Activated B cell treated with CpG ODN at 0.5 μM for 24 hours (primary cell): ENCODE measurements at regions of chr16 and their contacts with region 1.

Region 1: GRCh38 chr16:48365581-48366164 is 19.5 kb downstream of the SIAH1 start:
- DNase-seq: peak; percentile 74
- ATAC-seq: peak; percentile 94
- H3K4me3 Mint-ChIP-seq: peak overlapping the region; percentile 88
- H3K27ac Mint-ChIP-seq: peak overlapping the region; percentile 96
- H3K4me1 Mint-ChIP-seq: peaks cover 65% of the 10 kb centered on the region
- H3K27me3 Mint-ChIP-seq: no peaks in the 10 kb centered on the region
- CTCF ChIP-seq: no peak

Region 2: DNA sequence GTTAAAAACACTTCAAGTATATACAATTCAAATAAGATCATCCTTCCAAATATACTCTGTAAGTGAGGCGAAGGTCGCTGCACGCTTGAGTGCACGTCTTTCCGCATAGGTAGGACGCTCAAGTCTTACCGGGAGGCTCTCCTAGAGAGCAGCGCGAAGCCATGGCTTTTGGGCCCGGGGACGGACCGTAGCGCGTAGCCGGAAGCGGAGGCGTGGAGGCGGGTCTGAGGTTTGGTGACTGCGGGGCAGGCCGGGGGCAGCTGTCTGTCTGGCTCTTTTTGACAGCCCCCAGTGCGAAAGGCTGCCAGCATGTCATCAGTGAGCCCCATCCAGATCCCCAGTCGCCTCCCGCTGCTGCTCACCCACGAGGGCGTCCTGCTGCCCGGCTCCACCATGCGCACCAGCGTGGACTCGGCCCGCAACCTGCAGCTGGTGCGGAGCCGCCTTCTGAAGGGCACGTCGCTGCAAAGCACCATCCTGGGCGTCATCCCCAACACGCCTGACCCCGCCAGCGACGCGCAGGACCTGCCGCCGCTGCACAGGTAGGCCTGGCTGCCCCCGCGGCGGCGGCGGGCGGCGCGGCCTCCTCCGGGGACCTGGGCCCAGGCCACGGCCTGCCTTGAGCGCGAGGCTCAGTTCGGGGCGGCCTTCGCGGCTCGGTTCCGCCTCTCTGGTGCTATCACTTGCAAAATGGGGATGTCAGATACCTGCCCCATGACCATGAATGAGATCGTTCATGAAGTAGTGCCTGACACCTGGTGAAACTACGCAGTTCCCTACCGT is 121.4 kb before region 1 on chr16 and contains the start of gene LONP2:
- CTCF ChIA-PET with region 1: no interaction called
- POLR2A ChIA-PET with region 1: interaction called, 7 read pairs
- intact Hi-C with region 1: loop called (anchors 1 kb)
- DNase-seq: peak; percentile 86
- ATAC-seq: peak; percentile 97
- H3K4me3 Mint-ChIP-seq: peak within 1 kb of the TSS; percentile 91
- H3K27ac Mint-ChIP-seq: peak within 1 kb of the TSS; percentile 90
- H3K4me1 Mint-ChIP-seq: peaks cover 34% of the 10 kb centered on the region
- H3K27me3 Mint-ChIP-seq: no peaks in the 10 kb centered on the region
- CTCF ChIP-seq: no peak
- total RNA-seq, gene LONP2: 63.5 and 72.7 TPM in 2 replicates

Region 3: DNA sequence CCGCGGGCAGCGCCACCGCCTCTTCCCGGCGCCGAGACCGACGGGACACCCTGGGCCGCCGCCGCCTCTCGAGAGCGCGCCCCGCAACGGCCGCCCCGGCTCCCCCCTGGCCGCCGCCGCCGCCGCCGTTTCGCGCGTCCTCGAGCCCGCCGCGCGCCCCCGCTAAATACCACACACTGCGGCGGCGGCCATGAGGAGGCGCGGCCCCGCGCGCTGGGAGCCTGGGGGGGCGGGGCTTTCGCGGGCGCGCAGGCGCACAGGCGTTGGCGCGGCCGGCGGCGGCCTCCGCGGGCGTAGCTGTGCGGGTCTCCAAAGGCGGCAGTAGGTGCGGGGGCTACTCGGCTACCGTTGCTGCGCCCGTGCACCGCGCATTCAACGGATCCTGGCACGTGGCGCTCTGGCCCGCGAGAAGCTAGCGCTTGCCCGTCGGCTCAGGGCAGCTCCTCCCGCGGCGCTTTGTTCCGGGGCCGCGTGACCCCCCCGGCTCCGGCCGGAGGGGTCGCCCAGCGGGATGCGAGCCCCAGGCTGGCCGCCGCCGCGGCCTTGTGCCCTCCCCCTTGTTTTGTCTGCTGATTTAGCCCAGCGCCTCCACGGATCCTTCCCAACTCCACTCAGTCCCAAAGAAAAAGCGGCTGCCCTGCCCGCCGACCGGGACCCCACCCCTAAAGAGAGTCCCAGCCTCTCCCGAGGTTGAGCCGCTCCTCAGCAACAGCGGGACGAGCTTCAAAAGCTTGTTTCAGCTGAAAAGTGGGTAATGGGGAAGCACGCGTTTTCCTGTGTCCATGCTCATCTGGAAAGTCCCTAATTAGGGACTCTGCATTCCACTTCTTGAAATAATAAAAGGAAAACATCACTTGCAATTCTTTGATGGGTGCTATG is 19.8 kb after region 1 on chr16 and contains the start of gene SIAH1:
- CTCF ChIA-PET with region 1: interaction called, 3 read pairs
- POLR2A ChIA-PET with region 1: interaction called, 49 read pairs
- intact Hi-C with region 1: loop called (anchors 1 kb)
- DNase-seq: peak; percentile 97
- ATAC-seq: peak; percentile 80
- H3K4me3 Mint-ChIP-seq: peak within 1 kb of the TSS; percentile 93
- H3K27ac Mint-ChIP-seq: peak within 1 kb of the TSS; percentile 90
- H3K4me1 Mint-ChIP-seq: peaks cover 33% of the 10 kb centered on the region
- H3K27me3 Mint-ChIP-seq: no peaks in the 10 kb centered on the region
- CTCF ChIP-seq: no peak
- total RNA-seq, gene SIAH1: 26.9 and 31.5 TPM in 2 replicates

Region 4: DNA sequence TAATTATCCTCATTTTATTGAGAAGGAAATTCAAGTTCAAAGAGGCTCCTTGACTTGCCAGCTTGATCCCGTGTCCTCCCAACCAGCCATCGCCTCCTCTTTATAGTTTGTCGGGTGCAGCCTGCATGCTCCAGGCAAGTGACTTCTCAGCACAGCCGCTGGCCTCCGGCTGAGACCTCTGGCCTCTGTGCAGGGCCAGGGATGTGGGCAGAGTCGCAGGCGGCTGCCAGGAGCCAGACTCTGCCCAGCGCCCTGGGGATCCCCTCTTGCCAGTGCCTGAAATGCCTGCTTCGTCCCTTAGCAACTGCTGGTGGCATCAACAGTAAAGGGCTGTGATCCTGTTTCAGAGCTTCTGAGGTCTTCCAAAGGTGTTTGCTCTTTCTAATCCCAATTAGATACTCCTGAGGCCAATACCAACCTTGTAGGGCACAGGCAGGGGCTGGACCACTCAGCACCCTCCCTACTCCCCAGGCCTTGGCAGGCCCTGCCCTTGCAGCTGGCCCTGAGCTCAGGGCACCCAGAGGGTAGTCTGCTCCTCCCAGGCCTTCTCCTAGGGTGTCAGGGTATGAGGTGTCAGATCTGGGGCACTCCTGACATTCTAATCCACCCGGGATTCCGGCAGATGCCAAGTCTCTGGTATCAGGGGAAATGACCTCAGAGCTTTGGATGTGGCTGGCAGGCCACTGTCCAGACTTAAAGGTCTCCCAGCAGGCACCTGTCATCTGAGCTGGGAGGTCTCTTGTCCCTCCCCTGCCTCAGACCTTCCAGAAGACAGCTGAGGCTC is 87.5 kb after region 1 on chr16:
- CTCF ChIA-PET with region 1: no interaction called
- POLR2A ChIA-PET with region 1: interaction called, 7 read pairs
- intact Hi-C with region 1: loop called (anchors 1 kb)
- DNase-seq: no peak
- ATAC-seq: no peak
- H3K4me3 Mint-ChIP-seq: no peak overlapping the region
- H3K27ac Mint-ChIP-seq: no peak overlapping the region
- H3K4me1 Mint-ChIP-seq: peaks cover 30% of the 10 kb centered on the region
- H3K27me3 Mint-ChIP-seq: no peaks in the 10 kb centered on the region
- CTCF ChIP-seq: no peak

Region 5: DNA sequence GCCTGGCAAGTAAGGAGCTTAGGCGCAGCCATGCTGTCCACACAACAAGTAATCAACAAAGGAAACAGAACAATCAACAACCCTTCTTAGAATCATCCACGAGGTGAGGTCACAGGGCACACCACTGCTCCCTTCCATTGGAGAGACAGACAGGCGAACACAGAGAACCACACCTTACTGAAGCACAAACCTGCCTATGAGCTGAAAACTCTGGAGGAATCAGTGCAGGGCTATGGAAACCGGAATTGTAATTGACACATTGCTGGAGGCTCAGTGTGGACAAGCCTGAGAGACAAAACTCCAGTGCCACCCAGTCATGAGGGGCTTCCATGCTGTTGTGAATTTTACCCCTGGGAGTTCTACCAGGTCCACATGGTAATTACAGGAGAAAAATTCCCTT is 146.9 kb after region 1 on chr16:
- CTCF ChIA-PET with region 1: no interaction called
- POLR2A ChIA-PET with region 1: no interaction called
- intact Hi-C with region 1: no loop called
- DNase-seq: no peak
- ATAC-seq: no peak
- H3K4me3 Mint-ChIP-seq: no peak overlapping the region
- H3K27ac Mint-ChIP-seq: no peak overlapping the region
- H3K4me1 Mint-ChIP-seq: no peaks in the 10 kb centered on the region
- H3K27me3 Mint-ChIP-seq: no peaks in the 10 kb centered on the region
- CTCF ChIP-seq: no peak